ENCODE measurements at regions of chr5 and their contacts with region 1.

Region 1: GRCh38 chr5:58188262-58188651 is 271.6 kb downstream of the PLK2 start:
- DNase-seq: peak; percentile 73 to 98
- ATAC-seq: peak; percentile 96
- H3K4me3 ChIP-seq: no peak overlapping the region
- H3K27ac ChIP-seq: peak overlapping the region; percentile 91 to 97
- H3K4me1 ChIP-seq: peaks cover 85% of the 10 kb centered on the region
- CTCF ChIP-seq: peak; percentile 33; the same call in 2 of the 3 replicates
- EP300 ChIP-seq: peak; percentile 97 to 99
- POLR2A ChIP-seq: no peak
- RAD21 ChIP-seq: peak; percentile 74 to 87

Region 2: DNA sequence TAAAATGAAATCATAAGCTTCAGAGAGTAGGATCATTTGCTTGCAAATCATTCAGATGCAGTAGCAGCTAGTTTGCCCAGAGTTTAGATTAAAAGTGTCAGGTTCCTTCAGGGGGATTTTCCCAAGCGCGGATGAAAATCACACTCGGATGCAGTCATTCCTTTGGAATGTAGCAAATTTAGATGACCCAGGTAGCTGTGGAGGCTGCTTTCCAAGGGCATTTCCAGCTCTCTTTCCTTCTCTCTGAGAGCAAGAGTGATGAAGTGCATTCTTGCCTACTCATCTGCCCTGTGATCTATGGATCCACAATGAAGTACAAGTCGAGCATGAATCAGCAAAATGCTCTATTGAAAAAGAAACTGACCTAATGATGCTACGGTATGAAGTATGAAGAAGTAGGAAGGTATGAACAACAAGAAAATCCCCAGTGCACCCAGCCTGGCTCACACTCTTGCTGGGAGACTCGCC is 71.5 kb after region 1 on chr5:
- CTCF ChIA-PET with region 1: interaction called, 8 read pairs
- POLR2A ChIA-PET with region 1: interaction called, 13 read pairs
- DNase-seq: peak; percentile 86 to 96
- ATAC-seq: peak; percentile 99
- H3K4me3 ChIP-seq: peak overlapping the region; percentile 17; the same call in 1 of the 3 replicates
- H3K27ac ChIP-seq: peak overlapping the region; percentile 85 to 91
- H3K4me1 ChIP-seq: peaks cover 36% of the 10 kb centered on the region
- CTCF ChIP-seq: no peak
- EP300 ChIP-seq: peak; percentile 68 to 91; a peak in 3 of 5 replicates
- POLR2A ChIP-seq: no peak
- RAD21 ChIP-seq: peak; percentile 29 to 46

Region 3: DNA sequence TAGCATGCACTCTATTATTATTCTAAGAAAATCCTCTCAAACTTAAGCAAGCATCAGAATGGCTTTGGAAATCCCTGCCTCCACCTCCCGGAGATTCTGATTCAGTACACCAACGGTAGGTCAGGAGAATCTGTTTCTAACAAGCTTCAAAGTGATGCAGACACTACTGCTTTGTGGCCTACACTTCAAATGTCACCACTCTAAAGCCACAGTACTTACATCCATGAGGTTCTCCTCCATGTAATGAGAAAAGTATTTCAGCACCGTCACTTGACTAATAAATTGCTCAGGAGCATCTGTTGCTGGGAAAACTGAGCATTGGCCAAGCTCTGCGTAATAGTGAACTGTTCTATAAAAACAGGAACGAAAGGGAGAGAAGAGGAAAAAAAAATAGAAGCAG is 266.8 kb after region 1 on chr5:
- CTCF ChIA-PET with region 1: interaction called, 25 read pairs
- POLR2A ChIA-PET with region 1: interaction called, 58 read pairs
- DNase-seq: no peak
- ATAC-seq: no peak
- H3K4me3 ChIP-seq: peak overlapping the region; percentile 91
- H3K27ac ChIP-seq: peak overlapping the region; percentile 96 to 100
- H3K4me1 ChIP-seq: peaks cover 38% of the 10 kb centered on the region
- CTCF ChIP-seq: no peak
- EP300 ChIP-seq: no peak
- POLR2A ChIP-seq: no peak
- RAD21 ChIP-seq: no peak